ENCODE measurements at regions of chr7 and their contacts with region 1.

Region 1: DNA sequence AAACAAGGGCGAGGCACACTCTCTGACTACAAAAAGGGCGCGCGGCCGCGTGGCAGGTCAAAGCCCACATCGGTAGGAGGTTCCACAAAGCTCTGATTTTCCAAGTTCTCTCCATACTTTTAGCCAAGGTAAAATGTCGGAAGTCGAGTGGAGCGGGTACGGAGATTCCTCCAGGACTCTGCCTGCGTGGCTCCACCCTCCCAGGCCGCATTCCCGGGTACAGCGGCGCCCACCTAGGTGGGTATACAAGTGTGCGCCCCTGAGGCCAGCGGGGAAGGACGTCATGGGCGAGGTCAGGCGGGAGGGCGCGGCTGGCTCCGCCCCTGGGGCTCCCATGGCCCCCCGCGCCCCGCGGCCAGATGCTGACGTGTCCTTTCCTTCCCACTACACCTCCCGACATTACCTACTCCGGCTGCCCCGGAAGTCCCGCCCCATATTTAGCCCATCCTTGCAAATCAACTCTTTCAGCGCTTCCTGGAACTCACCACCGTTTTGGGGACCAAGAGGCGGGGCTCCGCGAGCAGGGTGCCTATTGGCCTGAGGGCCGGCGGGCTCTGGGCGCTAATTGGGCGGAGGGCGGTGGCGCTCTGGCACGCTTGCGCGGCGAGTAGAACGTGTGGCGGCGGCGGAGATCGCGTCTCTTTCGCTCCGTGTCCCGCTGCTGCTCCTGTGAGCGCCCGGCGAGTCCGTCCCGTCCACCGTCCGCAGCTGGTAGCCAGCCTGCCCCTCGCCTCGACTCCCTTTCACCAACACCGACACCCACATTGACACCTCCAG is at the start of gene SND1:
- DNase-seq: peak; percentile 99 to 100 (median 100)
- ATAC-seq: peak; percentile 97 to 99 (median 98)
- H3K4me3 ChIP-seq: peak within 1 kb of the TSS; percentile 50 to 97 (median 90)
- H3K27ac ChIP-seq: peak within 1 kb of the TSS; percentile 90 to 98 (median 94)
- H3K4me1 ChIP-seq: peaks cover 0 to 47% (median 33%) of the 10 kb centered on the region in 12 donors
- H3K27me3 ChIP-seq: no peaks in the 10 kb centered on the region
- CTCF ChIP-seq: no peak
- POLR2A ChIP-seq: peak in 1 of 2 donors; percentile 74
- total RNA-seq, gene SND1: 63.2 to 115 (median 76.3) TPM

Region 2: DNA sequence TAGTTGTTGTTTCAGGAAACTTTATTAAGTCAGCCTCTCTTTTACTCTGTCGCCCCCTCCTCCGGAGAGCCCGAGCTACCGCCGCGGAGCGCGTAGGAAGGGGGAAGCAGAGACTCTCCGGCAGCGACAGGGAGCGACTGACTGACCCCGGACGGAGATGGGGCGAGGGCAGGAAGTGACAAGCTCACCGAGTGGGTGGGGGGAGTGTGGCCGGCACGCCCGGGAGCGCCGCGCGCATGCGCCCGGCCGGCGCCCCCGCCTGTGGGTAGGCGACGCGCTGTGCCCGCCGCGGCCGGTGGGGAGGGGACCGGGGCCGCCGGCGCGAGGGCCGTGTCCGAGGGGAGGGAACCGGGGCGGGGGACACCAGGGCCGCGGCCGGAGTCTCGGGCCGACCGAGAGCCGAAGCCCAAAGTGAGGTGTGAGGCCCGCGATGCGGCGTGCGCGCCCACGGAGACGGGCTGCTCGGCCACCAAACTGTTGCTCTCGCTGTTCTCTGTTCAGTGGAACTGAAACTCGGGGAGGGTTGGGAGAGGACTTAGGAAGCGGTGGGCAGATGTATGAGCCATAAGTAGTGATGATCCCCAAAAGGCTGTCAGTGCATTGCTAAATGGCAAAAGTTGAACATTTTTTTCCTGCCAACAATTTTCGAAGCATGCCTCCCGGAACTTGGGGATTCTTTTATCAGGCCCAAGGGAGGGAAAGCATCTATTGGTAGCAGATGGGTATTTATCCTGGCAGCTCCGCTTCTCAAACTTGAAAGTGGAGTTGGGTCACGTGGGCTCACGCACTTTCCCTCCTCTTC is 259.0 kb before region 1 on chr7 and contains the start of gene ZNF800:
- intact Hi-C with region 1: loop called in 4 of 10 experiments (anchors 5 to 10 kb)
- DNase-seq: peak; percentile 93 to 95 (median 94)
- ATAC-seq: peak; percentile 99
- H3K4me3 ChIP-seq: peak within 1 kb of the TSS; percentile 76 to 99 (median 90)
- H3K27ac ChIP-seq: peak within 1 kb of the TSS; percentile 88 to 99 (median 94)
- H3K4me1 ChIP-seq: peaks cover 0 to 47% (median 20%) of the 10 kb centered on the region in 12 donors
- H3K27me3 ChIP-seq: no peaks in the 10 kb centered on the region
- CTCF ChIP-seq: peak in 1 of 12 donors; percentile 5
- POLR2A ChIP-seq: peak; percentile 16 to 86
- total RNA-seq, gene ZNF800: 20.3 to 34.7 (median 22.9) TPM

Region 3: DNA sequence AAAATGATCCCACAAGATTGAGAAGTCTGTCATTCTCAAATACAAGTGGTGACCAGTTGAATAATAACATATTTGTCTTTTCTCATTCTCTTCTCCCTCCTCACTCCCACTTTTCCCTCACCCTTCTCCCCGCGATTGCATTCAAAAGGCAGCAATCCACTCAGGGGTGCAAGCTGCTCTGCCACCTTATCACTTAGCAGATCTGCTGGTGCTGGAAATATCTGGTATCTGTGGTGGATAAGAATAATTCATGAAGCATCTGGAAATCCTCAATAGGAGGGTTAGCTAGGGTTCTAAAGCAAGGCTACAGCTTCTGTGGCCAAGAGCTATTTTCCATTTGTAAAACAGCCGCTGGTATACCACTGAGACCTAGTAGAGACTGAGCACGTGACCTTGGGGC is 110.2 kb before region 1 on chr7:
- intact Hi-C with region 1: no loop called
- DNase-seq: no peak
- ATAC-seq: no peak
- H3K4me3 ChIP-seq: no peak overlapping the region
- H3K27ac ChIP-seq: no peak overlapping the region
- H3K4me1 ChIP-seq: peaks cover 0 to 3% (median 0%) of the 10 kb centered on the region in 12 donors
- H3K27me3 ChIP-seq: peaks cover 0 to 30% (median 7%) of the 10 kb centered on the region in 9 donors
- CTCF ChIP-seq: no peak
- POLR2A ChIP-seq: no peak

Region 4: GRCh38 chr7:127585044-127585953 is 66.4 kb before region 1 on chr7 and contains the start of gene GCC1:
- intact Hi-C with region 1: loop called in 9 of 10 experiments (anchors 2 to 5 kb)
- DNase-seq: peak; percentile 92 to 97 (median 93)
- ATAC-seq: peak; percentile 75 to 91 (median 86)
- H3K4me3 ChIP-seq: peak within 1 kb of the TSS; percentile 53 to 99 (median 82)
- H3K27ac ChIP-seq: peak within 1 kb of the TSS; percentile 14 to 95 (median 90)
- H3K4me1 ChIP-seq: peaks cover 19 to 77% (median 57%) of the 10 kb centered on the region in 12 donors
- H3K27me3 ChIP-seq: no peaks in the 10 kb centered on the region
- CTCF ChIP-seq: no peak
- POLR2A ChIP-seq: peak in 1 of 2 donors; percentile 95
- total RNA-seq, gene GCC1: 5.8 to 12.8 (median 8.0) TPM

Region 5: DNA sequence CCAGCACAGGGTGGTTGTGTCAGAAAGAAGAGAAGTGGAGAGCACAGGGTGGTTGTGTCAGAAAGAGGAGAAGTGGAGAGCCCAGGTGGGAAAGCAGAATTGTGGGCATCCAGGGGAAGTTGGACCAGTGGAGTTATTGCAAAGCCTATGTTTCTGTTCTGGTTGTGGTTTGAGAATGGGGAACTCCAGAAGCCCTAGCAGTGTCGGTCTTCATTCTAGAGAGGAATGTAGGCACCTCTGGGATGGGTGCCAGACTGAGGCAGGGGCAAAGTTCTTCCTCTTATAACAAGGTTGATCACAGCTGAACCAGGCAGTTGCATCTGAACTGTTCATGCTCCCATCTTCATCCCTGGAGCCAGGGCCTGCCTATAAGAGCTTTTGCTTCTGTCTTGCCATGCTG is 57.3 kb before region 1 on chr7:
- intact Hi-C with region 1: loop called in 8 of 10 experiments (anchors 2 to 5 kb)
- DNase-seq: no peak
- ATAC-seq: peak in 1 of 4 donors; percentile 24
- H3K4me3 ChIP-seq: no peak overlapping the region
- H3K27ac ChIP-seq: no peak overlapping the region
- H3K4me1 ChIP-seq: peaks cover 0 to 8% (median 4%) of the 10 kb centered on the region in 12 donors
- H3K27me3 ChIP-seq: no peaks in the 10 kb centered on the region
- CTCF ChIP-seq: no peak
- POLR2A ChIP-seq: no peak

Region 6: GRCh38 chr7:127717502-127718339 is 66.0 kb after region 1 on chr7:
- intact Hi-C with region 1: no loop called
- DNase-seq: no peak
- ATAC-seq: no peak
- H3K4me3 ChIP-seq: no peak overlapping the region
- H3K27ac ChIP-seq: no peak overlapping the region
- H3K4me1 ChIP-seq: peaks cover 0 to 17% (median 0%) of the 10 kb centered on the region in 12 donors
- H3K27me3 ChIP-seq: no peaks in the 10 kb centered on the region
- CTCF ChIP-seq: no peak
- POLR2A ChIP-seq: no peak

Measured in heart left ventricle (tissue), 16 donors.